AG04449 (cell line): ENCODE measurements at regions of chr17 and their contacts with region 1.

Region 1: DNA sequence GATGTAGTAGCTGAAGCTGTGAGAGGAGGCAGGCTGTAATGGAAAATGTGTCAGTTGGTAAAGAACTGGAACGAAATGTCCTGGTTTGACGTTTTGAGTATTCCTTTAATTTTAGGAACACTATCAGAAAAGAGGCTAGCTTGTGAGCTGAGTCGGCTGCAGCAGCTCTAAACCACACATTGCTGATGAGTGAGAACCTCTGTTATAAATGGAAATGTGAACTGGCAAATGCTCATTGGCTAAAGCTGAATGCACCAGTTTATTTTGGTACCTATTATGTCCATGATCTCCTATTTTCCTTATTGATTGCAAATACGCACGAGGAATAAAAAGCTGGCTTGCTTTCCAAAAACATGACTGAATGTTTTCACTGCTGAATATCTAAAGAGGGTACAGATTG is 11.0 kb upstream of the WIPI1 start:
- DNase-seq: no peak
- H3K4me3 ChIP-seq: no peak overlapping the region
- CTCF ChIP-seq: no peak

Region 2: DNA sequence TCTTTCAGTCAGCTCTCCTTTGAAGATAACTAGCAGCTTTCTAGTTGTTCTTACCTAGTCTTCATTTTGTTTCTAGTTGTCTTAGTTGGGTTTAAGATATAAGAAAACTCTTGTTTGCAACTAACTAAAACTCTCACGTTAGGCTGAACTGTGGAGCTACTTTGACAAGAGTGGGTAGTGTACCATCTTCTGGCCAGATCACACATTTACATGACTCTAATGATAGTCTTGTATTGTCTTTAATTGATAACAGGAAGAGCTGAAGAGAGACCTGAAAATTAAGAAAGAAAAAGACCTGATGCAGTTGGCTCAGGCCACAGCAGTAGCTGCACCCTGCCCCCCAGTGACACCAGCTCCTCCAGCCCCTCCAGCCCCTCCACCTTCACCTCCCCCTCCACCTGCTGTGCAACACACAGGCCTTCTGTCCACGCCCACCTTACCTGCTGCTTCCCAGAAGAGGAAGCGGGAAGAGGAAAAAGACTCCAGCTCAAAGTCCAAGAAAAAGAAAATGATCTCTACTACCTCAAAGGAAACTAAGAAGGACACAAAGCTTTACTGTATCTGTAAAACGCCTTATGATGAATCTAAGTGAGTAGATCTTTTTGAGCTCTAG is 508.9 kb before region 1 on chr17:
- CTCF ChIA-PET with region 1: interaction called, 14 read pairs
- POLR2A ChIA-PET with region 1: no interaction called
- DNase-seq: no peak
- H3K4me3 ChIP-seq: no peak overlapping the region
- CTCF ChIP-seq: no peak

Region 3: GRCh38 chr17:68457539-68458259 is 10.6 kb before region 1 on chr17:
- CTCF ChIA-PET with region 1: interaction called, 57 read pairs
- POLR2A ChIA-PET with region 1: no interaction called
- DNase-seq: peak; percentile 85
- H3K4me3 ChIP-seq: peak overlapping the region; percentile 94
- CTCF ChIP-seq: no peak

Region 4: DNA sequence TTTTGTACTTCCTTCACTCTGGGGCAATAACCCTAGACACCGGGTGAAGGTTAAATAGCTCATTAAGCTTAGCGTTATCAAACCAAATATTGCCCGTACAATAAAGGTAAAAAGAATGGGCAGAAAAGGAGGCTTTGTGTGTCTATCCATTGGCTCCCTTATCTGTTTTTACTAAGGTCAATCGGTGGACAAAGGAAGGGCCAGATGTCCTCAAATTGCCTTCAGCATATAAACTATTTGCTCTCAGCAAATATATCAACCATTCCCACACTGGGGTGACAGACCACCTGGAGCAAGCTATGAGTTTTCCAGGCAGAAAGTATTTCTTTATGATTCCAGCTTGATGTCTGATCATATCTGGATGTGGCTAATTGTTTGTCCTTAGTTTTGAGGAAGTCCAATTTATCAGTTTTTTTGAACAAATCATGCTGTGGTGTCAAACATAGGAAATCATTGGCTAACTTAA is 14.3 kb after region 1 on chr17:
- CTCF ChIA-PET with region 1: interaction called, 17 read pairs
- POLR2A ChIA-PET with region 1: no interaction called
- DNase-seq: no peak
- H3K4me3 ChIP-seq: no peak overlapping the region
- CTCF ChIP-seq: no peak

Region 5: GRCh38 chr17:68542698-68543463 is 74.5 kb after region 1 on chr17:
- CTCF ChIA-PET with region 1: no interaction called
- POLR2A ChIA-PET with region 1: no interaction called
- DNase-seq: no peak
- H3K4me3 ChIP-seq: no peak overlapping the region
- CTCF ChIP-seq: no peak